ENCODE measurements at regions of chr7 and their contacts with region 1.

Region 1: DNA sequence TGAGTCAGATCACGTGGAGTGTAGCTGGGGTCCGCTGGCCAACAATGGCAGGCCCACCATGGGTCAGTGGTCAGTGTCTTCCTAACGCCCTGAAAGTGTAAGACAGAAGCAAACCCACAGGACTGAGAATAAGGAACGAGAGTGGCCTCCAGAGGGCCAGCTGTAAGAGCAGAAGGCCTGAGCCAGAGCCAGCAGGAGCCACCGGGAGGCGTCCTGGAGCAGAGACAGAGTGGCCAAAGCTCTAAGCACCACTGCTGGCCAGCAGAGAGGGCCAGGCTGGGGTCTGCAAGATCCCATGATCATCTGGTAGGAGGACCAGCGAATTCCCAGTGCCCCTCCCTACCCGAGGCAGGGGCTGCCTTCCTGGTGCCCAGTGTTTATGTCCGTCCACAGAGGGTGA is 9.2 kb downstream of the CCDC201 start:
- DNase-seq: no peak
- H3K4me3 ChIP-seq: no peak overlapping the region
- H3K27ac ChIP-seq: no peak overlapping the region
- H3K4me1 ChIP-seq: no peaks in the 10 kb centered on the region
- H3K27me3 ChIP-seq: peaks cover 0 to 33% (median 0%) of the 10 kb centered on the region in 7 donors
- CTCF ChIP-seq: no peak
- POLR2A ChIP-seq: no peak

Region 2: GRCh38 chr7:45157653-45158401 is 705.9 kb before region 1 on chr7 and contains the start of gene RAMP3:
- intact Hi-C with region 1: loop called (anchors 10 kb)
- DNase-seq: peak; percentile 75
- H3K4me3 ChIP-seq: peak within 1 kb of the TSS in 6 of 8 donors; percentile 10 to 63 (median 28)
- H3K27ac ChIP-seq: peak within 1 kb of the TSS in 2 of 8 donors; percentile 3 to 56
- H3K4me1 ChIP-seq: peaks cover 0 to 36% (median 13%) of the 10 kb centered on the region in 6 donors
- H3K27me3 ChIP-seq: peaks cover 0 to 47% (median 21%) of the 10 kb centered on the region in 7 donors
- CTCF ChIP-seq: no peak
- POLR2A ChIP-seq: no peak
- total RNA-seq, gene RAMP3: 6.3 to 27.8 (median 11.8) TPM

Region 3: GRCh38 chr7:45259966-45260646 is 603.6 kb before region 1 on chr7:
- intact Hi-C with region 1: loop called (anchors 10 kb)
- DNase-seq: peak; percentile 92
- H3K4me3 ChIP-seq: no peak overlapping the region
- H3K27ac ChIP-seq: no peak overlapping the region
- H3K4me1 ChIP-seq: peaks cover 2 to 21% (median 12%) of the 10 kb centered on the region in 6 donors
- H3K27me3 ChIP-seq: peaks cover 0 to 27% (median 0%) of the 10 kb centered on the region in 7 donors
- CTCF ChIP-seq: peak; percentile 85 to 99 (median 95)
- POLR2A ChIP-seq: no peak

Region 4: DNA sequence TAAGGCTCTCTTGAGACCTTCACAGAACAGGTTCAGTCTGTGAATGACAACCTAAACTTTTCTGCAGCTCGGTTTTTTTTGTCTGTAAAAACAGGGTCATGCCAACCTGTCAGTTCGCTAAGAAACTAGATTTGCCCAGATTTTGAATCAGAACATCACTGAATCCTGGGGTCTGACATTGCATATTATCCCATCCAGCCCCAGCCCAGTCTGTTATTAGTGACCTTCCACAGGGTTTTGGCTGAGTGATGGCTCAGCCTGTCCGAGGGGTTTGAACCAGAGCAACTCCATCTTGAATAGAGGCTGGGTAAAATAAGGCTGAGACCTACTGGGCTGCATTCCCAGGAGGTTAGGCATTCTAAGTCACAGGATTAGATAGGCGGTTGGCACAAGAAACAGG is 319.3 kb before region 1 on chr7:
- intact Hi-C with region 1: no loop called
- DNase-seq: no peak
- H3K4me3 ChIP-seq: no peak overlapping the region
- H3K27ac ChIP-seq: no peak overlapping the region
- H3K4me1 ChIP-seq: no peaks in the 10 kb centered on the region
- H3K27me3 ChIP-seq: no peaks in the 10 kb centered on the region
- CTCF ChIP-seq: no peak
- POLR2A ChIP-seq: no peak

Measured in spleen (tissue), 13 donors.